ENCODE measurements at regions of chr16 and their contacts with region 1.

Region 1: GRCh38 chr16:88737298-88738150 is 31.2 kb downstream of the CTU2 start:
- DNase-seq: no peak
- H3K4me3 ChIP-seq: no peak overlapping the region
- H3K27me3 ChIP-seq: no peaks in the 10 kb centered on the region
- CTCF ChIP-seq: peak; percentile 85

Region 2: DNA sequence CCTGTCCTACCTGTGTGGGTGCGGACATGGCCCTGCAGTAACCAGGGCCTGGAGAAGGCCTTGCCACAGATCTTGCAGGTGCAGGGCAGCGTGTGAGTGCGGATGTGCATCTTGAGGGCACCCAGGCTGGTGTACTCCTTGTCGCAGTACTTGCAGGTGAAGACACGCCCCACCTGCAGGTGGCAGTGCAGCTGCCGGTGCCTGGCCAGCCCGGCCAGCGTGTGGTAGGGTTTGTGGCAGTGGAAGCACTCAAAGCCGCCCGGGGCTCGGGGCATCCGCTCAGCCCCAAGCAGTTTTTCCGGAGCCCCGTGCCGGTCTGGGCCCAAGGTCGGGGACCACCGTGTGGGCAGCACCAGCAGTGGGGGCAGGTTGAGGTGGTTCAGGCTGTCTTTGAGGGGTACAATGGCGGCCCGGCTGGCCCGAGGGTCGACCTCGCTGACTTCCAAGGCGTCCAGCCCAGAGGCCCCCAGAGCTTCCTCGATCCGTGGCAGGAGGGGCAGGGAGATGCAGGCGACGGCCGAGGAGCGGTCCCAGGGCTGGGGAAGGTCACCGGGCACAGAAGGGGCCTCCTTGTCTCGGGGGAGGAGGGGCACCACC is 56.3 kb before region 1 on chr16:
- CTCF ChIA-PET with region 1: no interaction called
- POLR2A ChIA-PET with region 1: no interaction called
- DNase-seq: no peak
- H3K4me3 ChIP-seq: no peak overlapping the region
- H3K27me3 ChIP-seq: 0 out of 2 replicates have a peak, but pooled peaks cover 2% of the 10 kb centered on the region
- CTCF ChIP-seq: peak; percentile 17; the same call in 1 of the 2 replicates

Region 3: DNA sequence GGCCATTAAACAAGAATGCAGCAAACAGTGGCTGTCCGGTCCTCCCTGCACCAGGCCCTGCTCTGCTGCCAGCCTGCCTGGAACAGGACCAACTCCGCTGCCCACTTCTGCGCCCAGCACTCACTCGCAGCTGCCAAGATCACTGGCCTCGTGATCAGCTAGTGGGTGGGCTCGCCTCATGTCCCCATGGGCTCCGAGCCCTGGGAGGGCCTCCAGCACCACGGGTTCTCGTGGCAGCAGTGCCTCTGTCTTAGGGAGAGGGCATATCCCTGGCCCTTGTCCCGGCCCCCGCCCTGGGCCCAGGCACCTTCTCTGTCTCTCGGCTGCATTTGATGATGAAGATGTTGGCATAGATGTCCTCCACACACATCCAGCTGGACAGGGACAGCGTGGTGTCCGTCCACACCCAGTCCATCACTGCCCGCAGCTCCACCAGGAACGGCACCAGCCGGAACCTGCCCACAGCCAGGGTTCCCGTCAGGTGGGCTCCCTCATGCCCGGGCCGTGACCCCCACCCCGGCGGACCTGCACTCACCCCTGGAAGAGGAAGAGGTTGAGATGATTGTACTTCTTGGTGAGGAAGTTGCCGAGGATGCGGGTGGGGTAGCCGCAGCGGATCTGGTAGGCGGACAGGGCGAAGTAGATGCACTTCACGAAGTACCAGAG is 18.1 kb before region 1 on chr16:
- CTCF ChIA-PET with region 1: interaction called, 14 read pairs
- POLR2A ChIA-PET with region 1: no interaction called
- DNase-seq: no peak
- H3K4me3 ChIP-seq: no peak overlapping the region
- H3K27me3 ChIP-seq: no peaks in the 10 kb centered on the region
- CTCF ChIP-seq: no peak

Region 4: GRCh38 chr16:88763502-88764053 is 26.1 kb after region 1 on chr16:
- CTCF ChIA-PET with region 1: interaction called, 15 read pairs
- POLR2A ChIA-PET with region 1: no interaction called
- DNase-seq: no peak
- H3K4me3 ChIP-seq: no peak overlapping the region
- H3K27me3 ChIP-seq: no peaks in the 10 kb centered on the region
- CTCF ChIP-seq: no peak

Region 5: DNA sequence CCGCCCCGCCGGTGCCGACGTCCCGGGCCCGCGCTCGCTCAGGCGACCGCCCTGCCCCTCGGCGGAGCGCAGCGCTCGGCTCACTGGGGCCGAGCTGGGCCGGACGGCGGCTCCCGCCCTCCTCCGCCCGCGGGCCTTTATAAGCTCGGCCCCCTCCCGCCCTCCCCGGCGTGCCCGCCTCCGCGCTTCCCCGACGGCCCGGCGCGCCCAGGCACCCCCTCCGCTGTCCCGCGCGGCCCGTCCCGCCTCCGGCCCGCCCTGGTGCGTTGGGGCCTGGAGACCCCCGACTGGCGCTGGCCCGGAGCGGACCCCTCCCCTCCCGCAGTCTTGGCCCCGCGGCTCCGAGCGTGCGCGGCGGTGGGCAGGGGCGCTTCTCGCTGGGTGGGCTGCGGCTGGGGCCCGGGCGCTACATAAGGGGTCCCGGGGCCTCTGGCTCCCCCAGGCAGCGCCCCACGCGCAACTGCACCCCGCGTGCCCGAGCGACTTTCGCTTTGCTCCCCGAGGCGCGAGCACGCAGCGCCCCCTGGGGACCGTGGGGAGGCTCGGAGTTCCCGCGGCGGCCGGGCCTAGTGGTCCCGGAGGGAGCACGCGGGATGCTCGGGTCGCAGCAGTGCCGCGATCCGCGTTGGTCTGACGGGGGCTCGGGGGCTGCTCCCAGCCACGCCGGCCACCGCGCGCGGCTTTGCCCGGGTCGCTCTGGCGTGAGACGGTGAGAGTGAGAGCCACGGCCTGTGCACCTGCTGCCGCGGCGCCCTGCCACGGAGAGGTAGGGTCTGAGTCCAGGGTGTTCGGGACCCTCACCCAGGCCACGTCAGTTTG is 47.8 kb after region 1 on chr16 and contains the start of gene PIEZO1:
- CTCF ChIA-PET with region 1: interaction called, 111 read pairs
- POLR2A ChIA-PET with region 1: no interaction called
- DNase-seq: no peak
- H3K4me3 ChIP-seq: peak within 1 kb of the TSS; percentile 62
- H3K27me3 ChIP-seq: no peaks in the 10 kb centered on the region
- CTCF ChIP-seq: peak; percentile 83
- polyA plus RNA-seq, gene PIEZO1: 58.1 and 139 TPM in 2 replicates

Region 6: GRCh38 chr16:88811769-88812512 is 74.4 kb after region 1 on chr16 and contains the start of gene APRT:
- CTCF ChIA-PET with region 1: interaction called, 11 read pairs
- POLR2A ChIA-PET with region 1: no interaction called
- DNase-seq: peak; percentile 79
- H3K4me3 ChIP-seq: peak within 1 kb of the TSS; percentile 86
- H3K27me3 ChIP-seq: no peaks in the 10 kb centered on the region
- CTCF ChIP-seq: no peak
- polyA plus RNA-seq, gene APRT: 102 and 152 TPM in 2 replicates